ENCODE measurements at regions of chr2 and their contacts with region 1.

Region 1: DNA sequence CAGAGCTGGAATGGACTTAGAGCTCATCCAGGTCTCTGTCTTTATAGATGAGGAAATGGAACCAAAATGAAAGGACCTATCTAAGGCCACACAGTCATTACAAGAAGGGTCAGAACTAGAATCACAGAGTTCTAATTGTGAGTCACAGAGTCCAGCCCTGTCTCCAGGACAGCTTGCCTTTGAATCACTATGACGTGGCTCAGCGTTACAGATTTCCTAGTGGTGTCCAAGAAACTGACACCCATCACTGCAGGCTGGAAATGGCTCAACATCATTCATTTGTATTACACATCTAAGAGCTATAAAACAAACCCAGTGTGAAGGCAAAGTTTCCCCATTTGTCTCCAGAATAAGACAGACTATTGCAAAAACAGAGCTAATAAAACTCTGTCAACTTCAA is 164.3 kb upstream of the SIX2 start:
- DNase-seq: no peak
- H3K4me3 ChIP-seq: no peak overlapping the region
- H3K27ac ChIP-seq: no peak overlapping the region
- H3K4me1 ChIP-seq: no peaks in the 10 kb centered on the region
- H3K27me3 ChIP-seq: peaks cover 5 to 21% of the 10 kb centered on the region in 2 donors
- CTCF ChIP-seq: no peak
- POLR2A ChIP-seq: no peak

Region 2: GRCh38 chr2:45102141-45102540 is 71.4 kb before region 1 on chr2:
- intact Hi-C with region 1: no loop called
- DNase-seq: no peak
- H3K4me3 ChIP-seq: no peak overlapping the region
- H3K27ac ChIP-seq: no peak overlapping the region
- H3K4me1 ChIP-seq: no peaks in the 10 kb centered on the region
- H3K27me3 ChIP-seq: no peaks in the 10 kb centered on the region
- CTCF ChIP-seq: no peak
- POLR2A ChIP-seq: no peak

Region 3: GRCh38 chr2:45242161-45242741 is 68.7 kb after region 1 on chr2:
- intact Hi-C with region 1: loop called (anchors 2 kb)
- DNase-seq: no peak
- H3K4me3 ChIP-seq: no peak overlapping the region
- H3K27ac ChIP-seq: no peak overlapping the region
- H3K4me1 ChIP-seq: no peaks in the 10 kb centered on the region
- H3K27me3 ChIP-seq: no peaks in the 10 kb centered on the region
- CTCF ChIP-seq: no peak
- POLR2A ChIP-seq: no peak

Region 4: DNA sequence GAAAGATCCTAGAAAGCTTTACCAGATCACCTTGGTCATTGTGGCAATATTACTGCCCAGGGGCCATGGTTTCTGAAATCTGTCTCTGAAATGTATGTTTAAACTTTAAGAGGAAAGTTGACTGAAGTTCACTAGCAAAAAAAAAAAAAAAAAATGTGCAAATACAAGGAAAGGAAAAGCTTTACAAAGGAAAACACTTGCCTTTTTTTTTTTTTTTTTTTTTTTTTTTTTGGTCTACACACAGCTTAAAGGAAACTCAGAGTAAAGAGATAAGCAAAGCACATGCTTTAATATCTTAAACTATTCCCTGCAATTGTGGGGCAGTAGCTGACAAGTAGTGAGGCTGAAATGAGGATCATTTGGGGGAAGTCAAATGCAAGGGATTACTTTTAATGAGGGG is 949.5 kb after region 1 on chr2:
- intact Hi-C with region 1: no loop called
- DNase-seq: no peak
- H3K4me3 ChIP-seq: no peak overlapping the region
- H3K27ac ChIP-seq: no peak overlapping the region
- H3K4me1 ChIP-seq: no peaks in the 10 kb centered on the region
- H3K27me3 ChIP-seq: no peaks in the 10 kb centered on the region
- CTCF ChIP-seq: no peak
- POLR2A ChIP-seq: no peak